OCI-LY7 (cell line): ENCODE measurements at regions of chr12 and their contacts with region 1.

Region 1: GRCh38 chr12:26548227-26548626 is 284.8 kb downstream of the ITPR2 start:
- DNase-seq: no peak
- H3K4me3 ChIP-seq: no peak overlapping the region
- H3K27ac ChIP-seq: no peak overlapping the region
- H3K4me1 ChIP-seq: no peaks in the 10 kb centered on the region
- CTCF ChIP-seq: no peak

Region 2: GRCh38 chr12:26646571-26646970 is 98.3 kb after region 1 on chr12:
- CTCF ChIA-PET with region 1: no interaction called
- POLR2A ChIA-PET with region 1: interaction called, 12 read pairs
- intact Hi-C with region 1: no loop called
- DNase-seq: no peak
- H3K4me3 ChIP-seq: no peak overlapping the region
- H3K27ac ChIP-seq: no peak overlapping the region
- H3K4me1 ChIP-seq: no peaks in the 10 kb centered on the region
- CTCF ChIP-seq: no peak

Region 3: GRCh38 chr12:26791301-26791791 is 243.1 kb after region 1 on chr12:
- CTCF ChIA-PET with region 1: no interaction called
- POLR2A ChIA-PET with region 1: no interaction called
- intact Hi-C with region 1: no loop called
- DNase-seq: peak; percentile 9
- H3K4me3 ChIP-seq: no peak overlapping the region
- H3K27ac ChIP-seq: no peak overlapping the region
- H3K4me1 ChIP-seq: peaks cover 9% of the 10 kb centered on the region
- CTCF ChIP-seq: no peak